ENCODE measurements at regions of chr14 and their contacts with region 1.

Region 1: DNA sequence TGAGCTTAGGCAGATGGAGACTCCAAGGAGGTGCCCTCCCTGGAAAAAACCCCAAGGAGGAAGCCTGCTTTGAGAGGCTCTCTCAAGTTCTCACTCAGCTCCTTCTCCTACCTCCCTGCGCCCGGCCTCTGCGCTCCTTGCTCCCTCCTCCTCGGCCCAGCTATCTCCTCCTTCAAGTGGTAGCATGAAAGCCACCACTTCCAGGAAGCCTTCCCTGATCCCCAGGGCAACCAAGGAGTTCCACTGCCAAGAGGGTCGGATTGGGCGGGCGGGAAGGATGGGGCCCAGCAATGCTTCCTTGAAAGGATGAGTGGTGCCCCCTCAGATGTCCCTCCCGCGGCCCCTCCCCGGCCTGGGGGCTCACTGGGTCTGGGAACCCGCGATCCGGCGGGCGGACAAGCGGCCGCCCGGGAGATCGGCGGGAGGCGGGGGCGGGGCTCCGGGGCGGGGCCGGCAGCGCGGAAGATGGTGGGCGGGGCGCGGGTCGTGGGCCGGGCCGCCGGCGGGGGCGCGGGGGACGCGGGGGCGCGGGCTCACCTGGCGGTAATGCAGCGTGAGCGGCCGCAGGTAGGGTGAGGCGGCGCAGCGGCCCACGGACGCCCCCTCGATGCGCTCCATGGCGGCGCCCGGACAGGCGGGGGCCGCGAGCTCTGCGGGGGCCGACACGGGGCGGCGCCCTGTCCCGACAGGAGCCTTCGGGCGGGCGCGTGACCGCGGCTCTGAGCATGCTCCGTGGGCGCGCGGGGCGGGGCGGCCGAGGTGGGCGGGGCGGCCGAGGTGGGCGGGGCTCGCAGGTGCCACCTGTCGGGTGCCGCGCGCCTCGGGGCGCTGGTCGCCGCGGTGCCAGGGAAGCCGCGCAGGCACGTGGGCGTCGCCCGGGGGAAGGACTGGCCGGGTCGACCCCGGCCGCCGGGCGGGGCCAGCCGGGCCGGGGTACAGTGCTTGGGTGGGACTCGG is at the start of gene NUDT14:
- DNase-seq: peak; percentile 73 to 96 (median 88)
- ATAC-seq: peak; percentile 93
- H3K4me3 ChIP-seq: peak within 1 kb of the TSS; percentile 55
- H3K4me3 Mint-ChIP-seq: peak within 1 kb of the TSS; percentile 78
- H3K27ac ChIP-seq: no peak within 1 kb of the TSS
- H3K27ac Mint-ChIP-seq: no peak within 1 kb of the TSS
- H3K4me1 ChIP-seq: peaks cover 45% of the 10 kb centered on the region
- H3K4me1 Mint-ChIP-seq: peaks cover 7% of the 10 kb centered on the region
- H3K27me3 ChIP-seq: no peaks in the 10 kb centered on the region
- H3K27me3 Mint-ChIP-seq: no peaks in the 10 kb centered on the region
- CTCF ChIP-seq: no peak
- total RNA-seq, gene NUDT14: 9.0 to 9.2 TPM

Region 2: GRCh38 chr14:104976198-104977007 is 204.5 kb before region 1 on chr14:
- CTCF ChIA-PET with region 1: no interaction called
- POLR2A ChIA-PET with region 1: no interaction called
- intact Hi-C with region 1: loop called in 1 of 2 experiments (anchors 5 kb)
- DNase-seq: peak; percentile 76 to 92 (median 85)
- ATAC-seq: peak; percentile 79
- H3K4me3 ChIP-seq: no peak overlapping the region
- H3K4me3 Mint-ChIP-seq: peak overlapping the region; percentile 90
- H3K27ac ChIP-seq: no peak overlapping the region
- H3K27ac Mint-ChIP-seq: no peak overlapping the region
- H3K4me1 ChIP-seq: peaks cover 23% of the 10 kb centered on the region
- H3K4me1 Mint-ChIP-seq: peaks cover 5% of the 10 kb centered on the region
- H3K27me3 ChIP-seq: peaks cover 25 to 29% of the 10 kb centered on the region in 2 experiments
- H3K27me3 Mint-ChIP-seq: peaks cover 36% of the 10 kb centered on the region
- CTCF ChIP-seq: peak; percentile 89

Region 3: GRCh38 chr14:105161964-105162668 is 18.8 kb before region 1 on chr14:
- CTCF ChIA-PET with region 1: no interaction called
- POLR2A ChIA-PET with region 1: no interaction called
- intact Hi-C with region 1: no loop called
- DNase-seq: peak in 1 of 14 experiments; percentile 49
- ATAC-seq: no peak
- H3K4me3 ChIP-seq: no peak overlapping the region
- H3K4me3 Mint-ChIP-seq: no peak overlapping the region
- H3K27ac ChIP-seq: no peak overlapping the region
- H3K27ac Mint-ChIP-seq: no peak overlapping the region
- H3K4me1 ChIP-seq: peaks cover 3% of the 10 kb centered on the region
- H3K4me1 Mint-ChIP-seq: no peaks in the 10 kb centered on the region
- H3K27me3 ChIP-seq: peaks cover 10% of the 10 kb centered on the region in 2 experiments
- H3K27me3 Mint-ChIP-seq: peaks cover 13% of the 10 kb centered on the region
- CTCF ChIP-seq: no peak

Region 4: GRCh38 chr14:105375635-105376057 is 194.8 kb after region 1 on chr14:
- CTCF ChIA-PET with region 1: no interaction called
- POLR2A ChIA-PET with region 1: no interaction called
- intact Hi-C with region 1: no loop called
- DNase-seq: peak in 4 of 14 experiments; percentile 8 to 53 (median 34)
- ATAC-seq: peak; percentile 16
- H3K4me3 ChIP-seq: no peak overlapping the region
- H3K4me3 Mint-ChIP-seq: no peak overlapping the region
- H3K27ac ChIP-seq: no peak overlapping the region
- H3K27ac Mint-ChIP-seq: no peak overlapping the region
- H3K4me1 ChIP-seq: peaks cover 14% of the 10 kb centered on the region
- H3K4me1 Mint-ChIP-seq: peaks cover 14% of the 10 kb centered on the region
- H3K27me3 ChIP-seq: no peaks in the 10 kb centered on the region
- H3K27me3 Mint-ChIP-seq: no peaks in the 10 kb centered on the region
- CTCF ChIP-seq: no peak

Measured in CD4-positive, alpha-beta T cell (primary cell).